Heart left ventricle (tissue), 16 donors: ENCODE measurements at regions of chr14 and their contacts with region 1.

Region 1: DNA sequence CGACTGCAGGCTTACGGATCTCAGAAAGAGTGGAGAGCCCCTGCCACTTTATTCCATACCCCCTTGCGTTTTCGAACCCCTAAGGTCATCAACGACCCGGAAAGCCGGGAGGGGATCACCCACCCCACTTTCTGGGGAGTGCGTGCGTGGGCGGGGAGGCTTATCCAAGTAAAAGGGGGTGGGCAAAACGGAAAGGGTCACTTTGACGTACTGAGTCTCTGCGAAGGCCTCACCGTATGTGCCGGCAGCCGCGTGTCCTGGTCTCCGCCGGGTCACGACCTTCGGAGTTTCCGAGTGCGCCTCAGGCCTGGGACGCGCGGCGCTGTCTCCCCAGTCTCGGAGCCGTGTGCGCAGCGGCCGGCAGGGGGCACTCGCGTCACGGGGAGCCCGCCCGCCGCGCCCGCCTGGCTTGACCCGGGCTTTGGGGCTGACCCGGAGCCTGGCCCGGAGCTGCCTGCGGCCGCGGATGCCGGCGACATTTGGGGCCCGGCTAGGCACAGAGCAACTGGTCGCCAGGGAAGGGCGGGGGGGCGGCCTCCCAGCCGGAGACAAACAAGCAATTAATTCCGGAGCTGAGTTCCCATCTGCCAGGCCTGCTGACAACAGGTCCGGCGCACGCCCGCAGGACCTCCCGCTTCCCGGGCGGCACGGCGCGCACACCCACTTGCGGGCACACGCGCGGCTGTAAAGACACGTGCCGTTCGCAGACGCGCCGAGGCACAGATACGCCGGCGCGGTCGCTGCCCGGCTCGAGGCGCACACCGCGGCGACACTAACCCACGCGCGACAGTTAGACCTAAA is 890 bp upstream of the KIF26A start:
- DNase-seq: peak; percentile 71 to 89 (median 78)
- ATAC-seq: peak; percentile 62 to 88 (median 80)
- H3K4me3 ChIP-seq: peak overlapping the region; percentile 54 to 83 (median 60)
- H3K27ac ChIP-seq: peak overlapping the region in 11 of 12 donors; percentile 37 to 87 (median 71)
- H3K4me1 ChIP-seq: peaks cover 10 to 62% (median 27%) of the 10 kb centered on the region in 12 donors
- H3K27me3 ChIP-seq: peaks cover 8 to 63% (median 26%) of the 10 kb centered on the region in 9 donors
- CTCF ChIP-seq: peak; percentile 86 to 97 (median 94)
- POLR2A ChIP-seq: no peak

Region 2: GRCh38 chr14:104034976-104035699 is 102.4 kb before region 1 on chr14:
- intact Hi-C with region 1: no loop called
- DNase-seq: no peak
- ATAC-seq: no peak
- H3K4me3 ChIP-seq: no peak overlapping the region
- H3K27ac ChIP-seq: no peak overlapping the region
- H3K4me1 ChIP-seq: peaks cover 0 to 10% (median 0%) of the 10 kb centered on the region in 12 donors
- H3K27me3 ChIP-seq: peaks cover 0 to 3% (median 0%) of the 10 kb centered on the region in 9 donors
- CTCF ChIP-seq: no peak
- POLR2A ChIP-seq: no peak

Region 3: GRCh38 chr14:104184911-104185499 is 47.5 kb after region 1 on chr14:
- intact Hi-C with region 1: loop called in 4 of 10 experiments (anchors 2 to 5 kb)
- DNase-seq: peak; percentile 66 to 81 (median 72)
- ATAC-seq: peak; percentile 40 to 86 (median 65)
- H3K4me3 ChIP-seq: no peak overlapping the region
- H3K27ac ChIP-seq: peak overlapping the region in 11 of 12 donors; percentile 25 to 85 (median 75)
- H3K4me1 ChIP-seq: peaks cover 0 to 37% (median 9%) of the 10 kb centered on the region in 12 donors
- H3K27me3 ChIP-seq: no peaks in the 10 kb centered on the region
- CTCF ChIP-seq: no peak
- POLR2A ChIP-seq: no peak

Region 4: DNA sequence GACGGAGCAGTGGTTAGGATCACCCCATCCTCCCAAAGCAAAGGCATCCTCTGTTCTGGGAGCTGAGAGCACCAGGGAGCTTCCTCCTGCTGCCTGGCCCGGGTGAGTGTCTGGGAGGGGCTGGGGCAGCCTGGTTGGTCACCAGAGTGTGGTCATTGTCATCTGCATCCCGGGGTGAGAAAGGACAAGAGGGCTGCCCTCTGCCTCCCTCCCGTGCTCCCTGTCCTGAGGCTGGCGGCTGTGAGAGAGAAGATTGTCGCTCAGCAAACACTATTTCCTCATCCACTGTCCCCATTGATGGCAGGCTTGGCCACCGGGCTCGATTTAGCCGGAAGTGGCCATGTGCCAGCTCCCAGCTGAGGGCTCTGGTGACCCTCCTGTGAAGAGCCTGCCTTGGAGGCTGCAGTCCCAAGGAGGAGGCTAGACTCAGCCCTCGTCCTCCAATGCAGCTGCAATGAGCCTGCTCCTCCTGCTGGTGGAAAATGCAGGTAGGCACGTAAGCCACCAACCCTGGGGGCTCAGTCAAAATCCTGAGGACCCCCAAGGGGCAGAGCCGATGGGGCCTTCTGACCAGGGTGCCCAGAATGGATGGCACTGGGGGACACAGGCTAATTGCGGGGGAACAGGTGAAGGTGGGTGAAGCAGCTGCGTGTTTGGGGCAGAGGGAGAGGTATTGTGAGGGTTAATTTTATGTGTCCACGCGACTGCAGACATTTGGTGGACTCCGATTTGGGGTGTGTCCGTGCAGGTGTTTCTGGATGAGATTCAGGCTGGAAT is 156.5 kb after region 1 on chr14:
- intact Hi-C with region 1: loop called in 2 of 10 experiments (anchors 5 to 10 kb)
- DNase-seq: peak in 3 of 5 donors; percentile 14 to 57 (median 15)
- ATAC-seq: no peak
- H3K4me3 ChIP-seq: no peak overlapping the region
- H3K27ac ChIP-seq: no peak overlapping the region
- H3K4me1 ChIP-seq: no peaks in the 10 kb centered on the region
- H3K27me3 ChIP-seq: peaks cover 0 to 40% (median 16%) of the 10 kb centered on the region in 9 donors
- CTCF ChIP-seq: peak in 6 of 12 donors; percentile 9 to 28 (median 14)
- POLR2A ChIP-seq: no peak

Region 5: DNA sequence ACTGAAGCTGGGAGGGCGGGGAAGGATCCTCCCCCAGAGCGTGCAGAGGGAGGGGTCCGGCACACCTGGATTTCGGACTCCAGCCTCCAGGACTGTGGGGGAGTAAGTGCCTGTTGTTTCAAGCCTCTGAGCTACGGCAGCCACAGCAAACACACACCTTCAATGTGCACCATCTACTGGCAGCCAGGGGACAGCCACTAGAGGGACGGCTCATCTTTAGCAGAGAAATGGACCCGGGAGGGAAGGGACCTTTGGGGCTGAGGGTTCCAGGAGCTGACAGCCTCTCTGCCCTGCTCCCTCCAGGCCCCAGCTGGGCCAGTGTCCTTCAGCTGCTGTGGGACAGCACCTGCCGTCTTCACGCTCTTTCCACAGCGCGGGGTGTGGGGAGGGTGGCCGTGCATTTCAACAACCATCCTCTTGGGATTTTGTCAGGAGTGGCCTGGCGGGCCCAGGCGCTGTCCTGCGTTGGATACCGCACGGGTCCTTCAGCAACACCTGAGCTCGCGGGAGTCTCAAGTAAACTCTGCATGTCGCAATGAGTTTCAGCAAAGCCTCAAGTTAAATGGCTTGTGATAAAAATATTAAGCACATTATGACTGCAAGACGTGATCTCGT is 232.9 kb after region 1 on chr14:
- intact Hi-C with region 1: loop called in 3 of 10 experiments (anchors 1 to 5 kb)
- DNase-seq: peak in 3 of 5 donors; percentile 31 to 45 (median 40)
- ATAC-seq: peak in 3 of 4 donors; percentile 52 to 84 (median 66)
- H3K4me3 ChIP-seq: no peak overlapping the region
- H3K27ac ChIP-seq: no peak overlapping the region
- H3K4me1 ChIP-seq: no peaks in the 10 kb centered on the region
- H3K27me3 ChIP-seq: peaks cover 0 to 18% (median 0%) of the 10 kb centered on the region in 9 donors
- CTCF ChIP-seq: peak; percentile 20 to 65 (median 52)
- POLR2A ChIP-seq: no peak

Region 6: GRCh38 chr14:104399432-104400151 is 262.1 kb after region 1 on chr14:
- intact Hi-C with region 1: loop called in 2 of 10 experiments (anchors 5 to 10 kb)
- DNase-seq: peak in 1 of 5 donors; percentile 2
- ATAC-seq: peak in 2 of 4 donors; percentile 29 to 69
- H3K4me3 ChIP-seq: no peak overlapping the region
- H3K27ac ChIP-seq: no peak overlapping the region
- H3K4me1 ChIP-seq: peaks cover 0 to 13% (median 8%) of the 10 kb centered on the region in 12 donors
- H3K27me3 ChIP-seq: peaks cover 0 to 3% (median 0%) of the 10 kb centered on the region in 9 donors
- CTCF ChIP-seq: no peak
- POLR2A ChIP-seq: no peak

Region 7: GRCh38 chr14:104563742-104564615 is 426.5 kb after region 1 on chr14:
- intact Hi-C with region 1: loop called (anchors 1 to 2 kb)
- DNase-seq: peak; percentile 70 to 86 (median 78)
- ATAC-seq: peak; percentile 44 to 88 (median 80)
- H3K4me3 ChIP-seq: no peak overlapping the region
- H3K27ac ChIP-seq: no peak overlapping the region
- H3K4me1 ChIP-seq: peaks cover 0 to 23% (median 12%) of the 10 kb centered on the region in 12 donors
- H3K27me3 ChIP-seq: peaks cover 0 to 44% (median 4%) of the 10 kb centered on the region in 9 donors
- CTCF ChIP-seq: peak; percentile 67 to 91 (median 86)
- POLR2A ChIP-seq: no peak